Cardiac septum (tissue), 1 donor: ENCODE measurements at regions of chr19 and their contacts with region 1.

Region 1: GRCh38 chr19:51020988-51021651 is 1.6 kb upstream of the KLK10 start:
- DNase-seq: no peak

Region 2: DNA sequence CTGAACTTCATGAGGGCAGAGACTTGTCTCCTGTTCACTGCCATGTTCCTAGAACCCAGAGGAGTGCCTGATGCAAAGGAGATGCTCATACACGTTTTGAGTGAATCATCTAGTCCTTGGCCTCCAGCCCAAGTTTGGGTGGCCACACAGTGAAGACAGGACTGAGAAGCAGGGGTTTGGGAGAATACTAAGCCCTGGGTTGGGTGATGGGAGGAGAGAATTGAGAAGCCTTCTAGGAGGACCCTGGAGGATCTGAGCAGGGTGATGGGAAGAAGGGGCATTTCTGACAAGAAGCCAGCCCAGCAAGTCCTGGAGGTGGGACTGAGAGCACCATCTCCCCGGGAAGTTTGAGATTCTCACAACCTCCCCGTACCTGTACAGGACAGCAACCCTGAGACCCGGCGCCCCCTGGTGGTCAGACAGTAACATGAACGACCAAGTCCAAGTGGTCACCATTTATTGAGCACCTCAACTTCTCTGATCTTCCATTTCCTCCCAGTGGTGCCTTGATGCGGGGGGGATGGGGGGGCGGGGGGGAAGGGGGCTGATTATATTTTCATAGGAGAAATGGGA is 76.1 kb after region 1 on chr19:
- intact Hi-C with region 1: loop called (anchors 2 kb)
- DNase-seq: peak; percentile 88

Region 3: DNA sequence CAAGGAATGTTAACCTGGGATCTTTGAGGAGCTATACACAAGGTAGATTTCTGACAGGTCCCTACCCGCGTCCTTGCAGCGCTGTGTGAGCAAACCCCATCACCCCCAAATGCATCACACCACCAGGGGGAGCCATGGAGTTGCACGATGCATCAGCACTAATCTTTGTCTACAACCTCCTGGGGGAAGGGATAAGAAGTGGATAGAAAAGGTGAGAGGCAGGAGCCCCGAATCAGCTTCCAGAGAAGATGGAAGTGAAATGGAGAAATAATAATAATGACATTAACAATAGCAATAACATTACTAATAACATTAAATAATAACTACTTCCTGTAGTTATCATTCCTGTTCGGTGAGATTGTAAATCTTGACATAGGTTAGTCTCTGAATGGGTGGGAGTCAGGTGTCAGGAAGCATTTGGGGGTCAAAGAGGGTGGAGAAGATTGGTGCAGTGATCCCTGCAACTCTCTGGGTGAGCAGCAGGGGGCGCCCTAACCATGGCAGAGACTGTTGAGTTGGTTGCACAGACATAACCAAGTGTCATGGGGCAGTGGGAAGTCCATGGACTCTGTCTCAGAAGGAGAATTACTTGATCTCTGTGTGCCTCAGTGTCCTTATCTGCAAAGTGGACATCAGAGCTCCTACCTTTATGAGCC is 137.5 kb after region 1 on chr19:
- intact Hi-C with region 1: loop called (anchors 5 kb)
- DNase-seq: peak; percentile 87